Activated naive CD4-positive, alpha-beta T cell treated with anti-CD3 and anti-CD28 coated beads, Interleukin-2, amount 10 ng/mL, durations not matched to agents 7 days and 5 days (primary cell): ENCODE measurements at regions of chr1 and their contacts with region 1.

Region 1: DNA sequence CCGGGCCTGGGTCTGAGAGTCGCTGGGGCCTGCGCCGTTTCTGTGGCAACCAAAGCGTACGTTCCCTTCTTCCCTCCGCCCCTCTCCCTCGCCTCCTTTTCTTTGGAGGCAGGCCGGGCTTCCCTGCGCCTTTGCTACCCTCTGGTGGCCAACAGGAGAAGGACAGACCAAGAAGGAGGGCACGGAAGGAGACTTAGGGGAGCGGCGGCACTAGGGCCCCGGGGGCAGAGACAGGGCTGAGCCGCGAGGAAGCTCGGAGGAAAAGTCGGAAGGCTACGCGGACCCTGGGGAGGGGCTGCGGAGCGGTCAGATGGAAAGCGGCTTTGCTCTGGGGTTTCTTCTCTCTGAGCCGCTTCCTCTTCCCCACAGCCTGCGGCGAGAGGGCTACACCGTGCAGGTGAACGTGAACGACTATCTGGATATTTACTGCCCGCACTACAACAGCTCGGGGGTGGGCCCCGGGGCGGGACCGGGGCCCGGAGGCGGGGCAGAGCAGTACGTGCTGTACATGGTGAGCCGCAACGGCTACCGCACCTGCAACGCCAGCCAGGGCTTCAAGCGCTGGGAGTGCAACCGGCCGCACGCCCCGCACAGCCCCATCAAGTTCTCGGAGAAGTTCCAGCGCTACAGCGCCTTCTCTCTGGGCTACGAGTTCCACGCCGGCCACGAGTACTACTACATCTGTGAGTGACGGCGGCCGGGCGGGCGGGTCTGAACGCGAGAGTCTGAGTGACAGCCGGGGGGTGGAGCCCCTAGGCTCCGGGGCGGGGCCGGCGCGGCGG is 6.3 kb downstream of the EFNA3 start:
- DNase-seq: peak; percentile 94
- H3K4me3 Mint-ChIP-seq: peak overlapping the region; percentile 82
- H3K27ac Mint-ChIP-seq: peak overlapping the region; percentile 92
- H3K4me1 Mint-ChIP-seq: peaks cover 45% of the 10 kb centered on the region
- H3K27me3 Mint-ChIP-seq: peaks cover 60% of the 10 kb centered on the region

Region 2: GRCh38 chr1:154558575-154559465 is 526.1 kb before region 1 on chr1 and contains the start of gene UBE2Q1:
- CTCF ChIA-PET with region 1: interaction called, 13 read pairs
- DNase-seq: peak; percentile 100
- H3K4me3 Mint-ChIP-seq: peak within 1 kb of the TSS; percentile 91
- H3K27ac Mint-ChIP-seq: peak within 1 kb of the TSS; percentile 87
- H3K4me1 Mint-ChIP-seq: peaks cover 36% of the 10 kb centered on the region
- H3K27me3 Mint-ChIP-seq: peaks cover 8% of the 10 kb centered on the region

Region 3: DNA sequence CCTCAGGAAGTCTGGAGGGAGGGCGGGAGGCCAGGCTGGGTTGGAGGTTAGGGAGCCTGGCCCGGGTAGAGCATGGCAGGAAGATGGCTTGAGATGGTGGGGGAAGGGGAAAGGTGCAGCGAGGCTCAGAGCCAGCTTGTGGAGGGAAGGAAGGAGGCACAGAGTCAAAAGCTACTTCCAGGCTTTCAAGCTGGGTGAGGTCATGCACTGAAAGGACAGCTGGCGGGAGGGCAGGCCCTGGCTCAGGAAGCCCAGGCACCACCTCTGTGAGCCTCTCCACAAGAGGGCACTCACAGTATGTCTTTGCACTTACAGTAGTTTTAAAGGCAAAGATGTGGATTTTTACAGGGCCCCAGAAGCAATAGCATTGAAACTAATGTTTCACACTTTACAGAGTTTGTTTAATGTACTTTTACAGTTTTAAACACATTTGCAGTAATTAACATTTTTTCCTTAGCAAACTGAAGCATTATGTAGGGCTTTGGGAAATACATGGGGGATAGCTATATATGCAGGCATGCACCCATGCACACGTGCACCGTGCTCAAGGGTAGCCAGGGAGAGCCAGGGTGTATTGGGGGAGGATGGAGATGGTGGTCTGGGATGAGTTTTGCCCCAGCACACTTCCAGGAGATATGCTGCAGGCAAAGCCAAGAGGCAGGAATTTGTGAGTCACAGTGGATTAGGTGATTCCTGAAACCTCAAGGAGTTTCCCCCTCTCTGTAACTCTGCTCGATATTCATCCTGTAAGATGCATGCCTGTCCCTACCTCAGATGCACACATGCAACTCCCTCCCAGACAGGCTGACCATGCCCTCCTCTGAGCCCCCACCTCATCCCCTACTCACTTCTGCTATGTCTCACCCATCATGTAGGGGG is 39.9 kb before region 1 on chr1:
- CTCF ChIA-PET with region 1: interaction called, 13 read pairs
- DNase-seq: peak; percentile 83
- H3K4me3 Mint-ChIP-seq: no peak overlapping the region
- H3K27ac Mint-ChIP-seq: no peak overlapping the region
- H3K4me1 Mint-ChIP-seq: peaks cover 20% of the 10 kb centered on the region
- H3K27me3 Mint-ChIP-seq: peaks cover 38% of the 10 kb centered on the region

Region 4: GRCh38 chr1:155063550-155064110 is 21.3 kb before region 1 on chr1 and contains the start of gene EFNA4:
- CTCF ChIA-PET with region 1: interaction called, 140 read pairs
- DNase-seq: peak; percentile 93
- H3K4me3 Mint-ChIP-seq: peak within 1 kb of the TSS; percentile 76
- H3K27ac Mint-ChIP-seq: peak within 1 kb of the TSS; percentile 61
- H3K4me1 Mint-ChIP-seq: peaks cover 36% of the 10 kb centered on the region
- H3K27me3 Mint-ChIP-seq: no peaks in the 10 kb centered on the region

Region 5: DNA sequence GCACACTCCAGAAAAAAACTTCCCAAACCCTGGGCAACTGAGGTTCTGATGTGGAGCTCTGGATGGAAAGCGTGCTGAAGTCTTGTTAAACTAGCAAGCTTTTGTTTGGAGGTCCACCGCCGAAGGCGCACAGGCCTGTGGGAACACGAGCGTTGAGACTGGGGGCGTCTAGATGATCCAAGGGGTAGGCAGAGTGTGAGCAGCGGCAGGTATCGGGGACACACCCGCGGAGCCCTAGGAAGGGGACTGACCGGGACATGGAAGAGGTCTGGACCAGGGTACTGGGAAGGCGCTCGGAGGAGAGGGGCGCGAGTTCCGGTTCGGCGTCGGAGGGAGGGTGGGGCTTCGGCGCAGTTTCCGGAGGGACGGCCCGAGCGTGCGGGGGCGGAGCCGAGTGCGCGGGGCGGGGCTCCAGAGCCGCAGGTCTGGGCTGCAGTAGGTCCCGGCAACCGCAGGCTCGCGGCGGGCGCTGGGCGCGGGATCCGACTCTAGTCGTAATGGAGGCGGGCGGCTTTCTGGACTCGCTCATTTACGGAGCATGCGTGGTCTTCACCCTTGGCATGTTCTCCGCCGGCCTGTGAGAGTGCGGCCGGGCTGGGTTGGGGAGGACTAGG is 50.6 kb after region 1 on chr1 and contains the start of gene SLC50A1:
- CTCF ChIA-PET with region 1: interaction called, 12 read pairs
- DNase-seq: peak; percentile 95
- H3K4me3 Mint-ChIP-seq: peak within 1 kb of the TSS; percentile 95
- H3K27ac Mint-ChIP-seq: peak within 1 kb of the TSS; percentile 97
- H3K4me1 Mint-ChIP-seq: peaks cover 44% of the 10 kb centered on the region
- H3K27me3 Mint-ChIP-seq: peaks cover 11% of the 10 kb centered on the region

Region 6: GRCh38 chr1:155172732-155173477 is 88.0 kb after region 1 on chr1 and contains the start of gene KRTCAP2:
- CTCF ChIA-PET with region 1: interaction called, 226 read pairs
- DNase-seq: peak; percentile 97
- H3K4me3 Mint-ChIP-seq: peak within 1 kb of the TSS; percentile 97
- H3K27ac Mint-ChIP-seq: peak within 1 kb of the TSS; percentile 98
- H3K4me1 Mint-ChIP-seq: peaks cover 65% of the 10 kb centered on the region
- H3K27me3 Mint-ChIP-seq: peaks cover 4% of the 10 kb centered on the region